ENCODE measurements at regions of chr12 and their contacts with region 1.

Region 1: GRCh38 chr12:27592548-27592947 is 68.5 kb downstream of the PPFIBP1 start:
- DNase-seq: peak; percentile 88
- H3K4me3 Mint-ChIP-seq: peak overlapping the region; percentile 30
- H3K27ac Mint-ChIP-seq: peak overlapping the region; percentile 97
- H3K4me1 Mint-ChIP-seq: peaks cover 65% of the 10 kb centered on the region
- H3K27me3 Mint-ChIP-seq: no peaks in the 10 kb centered on the region
- CTCF ChIP-seq: no peak

Region 2: GRCh38 chr12:27542628-27543027 is 49.9 kb before region 1 on chr12:
- CTCF ChIA-PET with region 1: interaction called, 4 read pairs
- POLR2A ChIA-PET with region 1: interaction called, 12 read pairs
- intact Hi-C with region 1: loop called (anchors 5 kb)
- DNase-seq: peak; percentile 80
- H3K4me3 Mint-ChIP-seq: peak overlapping the region; percentile 46
- H3K27ac Mint-ChIP-seq: peak overlapping the region; percentile 99
- H3K4me1 Mint-ChIP-seq: peaks cover 40% of the 10 kb centered on the region
- H3K27me3 Mint-ChIP-seq: no peaks in the 10 kb centered on the region
- CTCF ChIP-seq: no peak

Region 3: DNA sequence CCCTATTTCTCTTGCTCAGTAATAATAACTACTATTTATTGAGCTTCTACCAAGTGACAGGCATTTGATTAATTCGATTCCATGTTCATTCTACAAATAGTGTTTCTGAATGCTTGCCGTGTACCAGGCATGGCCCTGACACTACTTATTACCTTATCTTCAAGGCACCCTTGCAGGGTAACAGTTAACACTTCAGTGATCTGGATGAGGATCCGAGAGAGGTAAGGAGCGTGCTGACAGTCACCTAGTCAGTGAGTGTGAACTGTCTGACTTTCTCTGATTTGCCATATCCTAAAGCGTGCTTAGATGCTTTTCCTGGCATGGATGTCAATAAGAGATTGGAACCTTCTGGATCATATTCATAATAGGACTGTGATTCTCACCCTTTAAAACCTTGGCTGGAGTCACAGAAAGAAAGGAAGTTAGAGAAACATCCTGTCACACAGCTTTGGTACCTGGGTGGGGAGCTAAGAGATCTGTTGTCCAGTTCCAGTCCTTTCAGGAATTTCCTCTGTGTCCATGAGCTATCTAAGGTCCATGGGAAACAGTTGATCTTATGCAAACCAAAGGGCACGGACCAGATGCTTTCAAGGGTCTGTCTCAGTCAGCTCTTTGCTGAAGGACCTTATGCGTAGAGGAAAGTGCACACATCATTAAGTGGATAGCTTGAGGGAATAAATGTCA is 13.7 kb before region 1 on chr12:
- CTCF ChIA-PET with region 1: interaction called, 3 read pairs
- POLR2A ChIA-PET with region 1: interaction called, 11 read pairs
- intact Hi-C with region 1: no loop called
- DNase-seq: no peak
- H3K4me3 Mint-ChIP-seq: no peak overlapping the region
- H3K27ac Mint-ChIP-seq: peak overlapping the region; percentile 80
- H3K4me1 Mint-ChIP-seq: peaks cover 57% of the 10 kb centered on the region
- H3K27me3 Mint-ChIP-seq: no peaks in the 10 kb centered on the region
- CTCF ChIP-seq: no peak

Region 4: DNA sequence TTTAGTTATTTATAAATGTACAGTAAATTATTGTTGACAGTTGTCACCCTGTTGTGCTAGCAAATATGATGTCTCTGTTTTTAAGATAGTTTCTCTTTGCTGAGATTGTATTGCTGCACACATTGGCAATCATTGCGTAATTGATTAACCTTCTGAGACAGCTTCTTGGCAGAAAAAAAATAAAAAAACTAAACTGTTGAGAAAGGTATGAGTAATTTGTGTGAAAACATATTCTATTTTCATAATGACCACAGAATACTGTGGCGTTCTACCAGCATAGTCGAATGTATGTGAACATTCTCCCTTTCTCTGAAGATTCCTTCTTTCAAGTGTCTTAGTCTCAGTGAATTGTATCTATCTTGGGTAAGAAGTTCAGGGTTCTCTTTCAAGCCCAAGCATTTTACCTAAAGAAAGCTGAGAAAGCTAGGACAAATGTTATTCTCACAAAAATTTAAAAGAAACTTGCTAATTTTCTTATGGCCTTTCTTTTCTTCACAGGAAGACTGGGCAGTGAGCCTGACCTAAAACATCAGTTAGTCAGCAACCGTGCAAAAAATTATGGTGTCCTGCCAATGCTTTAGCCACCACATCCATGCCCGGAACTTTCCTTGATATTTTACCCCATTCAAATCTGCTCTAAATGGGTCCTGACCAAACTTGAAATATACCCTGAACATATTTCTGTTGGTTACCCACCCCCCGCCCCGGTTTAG is 34.7 kb after region 1 on chr12:
- CTCF ChIA-PET with region 1: no interaction called
- POLR2A ChIA-PET with region 1: interaction called, 15 read pairs
- intact Hi-C with region 1: loop called (anchors 5 kb)
- DNase-seq: peak; percentile 83
- H3K4me3 Mint-ChIP-seq: peak overlapping the region; percentile 57
- H3K27ac Mint-ChIP-seq: peak overlapping the region; percentile 89
- H3K4me1 Mint-ChIP-seq: peaks cover 33% of the 10 kb centered on the region
- H3K27me3 Mint-ChIP-seq: no peaks in the 10 kb centered on the region
- CTCF ChIP-seq: no peak